GM10248 (cell line): ENCODE measurements at regions of chr10 and their contacts with region 1.

Region 1: DNA sequence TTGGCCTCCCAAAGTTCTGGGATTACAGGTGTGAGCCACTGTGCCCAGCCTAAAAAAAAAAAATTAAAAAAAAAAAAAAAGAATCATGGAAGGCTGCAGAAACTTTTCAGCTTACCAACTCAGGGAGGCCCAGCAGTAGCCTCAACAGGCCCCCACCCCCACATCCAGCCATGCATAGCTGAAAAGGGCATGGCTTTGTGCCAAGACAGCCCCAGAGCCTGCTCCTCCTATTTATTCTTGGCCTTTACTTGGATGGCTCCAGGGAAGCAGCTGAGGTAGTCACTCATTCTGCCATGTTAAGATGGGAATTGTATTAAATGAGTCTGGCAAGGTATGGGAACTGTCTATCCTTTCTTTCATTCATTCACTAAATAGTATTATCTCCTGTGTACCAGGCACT is 13.7 kb upstream of the CNNM2 start:
- DNase-seq: no peak
- CTCF ChIP-seq: no peak

Region 2: GRCh38 chr10:102729029-102730026 is 175.0 kb before region 1 on chr10:
- CTCF ChIA-PET with region 1: interaction called, 22 read pairs
- POLR2A ChIA-PET with region 1: no interaction called
- DNase-seq: peak; percentile 77
- CTCF ChIP-seq: peak; percentile 94

Region 3: DNA sequence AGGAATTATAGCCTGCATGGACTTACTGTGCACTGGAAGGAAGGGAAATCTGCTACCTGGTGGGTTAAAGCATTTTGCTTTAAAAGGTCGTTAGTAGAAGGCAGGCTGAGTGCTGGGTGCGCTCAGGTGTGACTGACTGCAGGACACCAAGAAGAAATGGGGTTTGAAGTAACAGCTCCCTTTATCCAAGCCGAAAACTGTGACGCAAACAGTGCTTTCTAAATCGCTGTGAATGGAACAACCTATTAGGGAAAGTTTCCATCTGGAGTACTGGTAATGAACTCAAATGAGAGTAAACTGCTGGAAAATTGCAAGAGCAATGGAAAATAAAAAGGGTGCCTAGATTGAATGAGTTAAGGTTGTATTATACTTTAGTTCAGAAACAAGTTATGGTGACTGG is 109.1 kb after region 1 on chr10:
- CTCF ChIA-PET with region 1: no interaction called
- POLR2A ChIA-PET with region 1: no interaction called
- DNase-seq: no peak
- CTCF ChIP-seq: no peak